ENCODE measurements at regions of chr5 and their contacts with region 1.

Region 1: GRCh38 chr5:156934450-156935211 is 28.4 kb downstream of the TIMD4 start:
- DNase-seq: peak; percentile 42
- H3K4me3 Mint-ChIP-seq: no peak overlapping the region
- H3K27ac Mint-ChIP-seq: peak overlapping the region; percentile 81
- H3K4me1 Mint-ChIP-seq: peaks cover 45% of the 10 kb centered on the region
- H3K27me3 Mint-ChIP-seq: no peaks in the 10 kb centered on the region

Region 2: GRCh38 chr5:155943516-155944407 is 990.9 kb before region 1 on chr5:
- intact Hi-C with region 1: loop called (anchors 5 kb)
- DNase-seq: no peak
- H3K4me3 Mint-ChIP-seq: no peak overlapping the region
- H3K27ac Mint-ChIP-seq: no peak overlapping the region
- H3K4me1 Mint-ChIP-seq: peaks cover 5% of the 10 kb centered on the region
- H3K27me3 Mint-ChIP-seq: peaks cover 1% of the 10 kb centered on the region

Region 3: GRCh38 chr5:156444753-156445291 is 489.8 kb before region 1 on chr5:
- intact Hi-C with region 1: no loop called
- DNase-seq: no peak
- H3K4me3 Mint-ChIP-seq: no peak overlapping the region
- H3K27ac Mint-ChIP-seq: no peak overlapping the region
- H3K4me1 Mint-ChIP-seq: no peaks in the 10 kb centered on the region
- H3K27me3 Mint-ChIP-seq: peaks cover 10% of the 10 kb centered on the region

Region 4: GRCh38 chr5:156722358-156722757 is 212.3 kb before region 1 on chr5:
- intact Hi-C with region 1: loop called (anchors 10 kb)
- DNase-seq: no peak
- H3K4me3 Mint-ChIP-seq: no peak overlapping the region
- H3K27ac Mint-ChIP-seq: no peak overlapping the region
- H3K4me1 Mint-ChIP-seq: no peaks in the 10 kb centered on the region
- H3K27me3 Mint-ChIP-seq: peaks cover 16% of the 10 kb centered on the region

Region 5: GRCh38 chr5:156815988-156816599 is 118.5 kb before region 1 on chr5:
- intact Hi-C with region 1: loop called (anchors 5 kb)
- DNase-seq: no peak
- H3K4me3 Mint-ChIP-seq: no peak overlapping the region
- H3K27ac Mint-ChIP-seq: no peak overlapping the region
- H3K4me1 Mint-ChIP-seq: peaks cover 2% of the 10 kb centered on the region
- H3K27me3 Mint-ChIP-seq: peaks cover 2% of the 10 kb centered on the region

Region 6: GRCh38 chr5:156893517-156893916 is 41.1 kb before region 1 on chr5:
- intact Hi-C with region 1: loop called (anchors 5 kb)
- DNase-seq: no peak
- H3K4me3 Mint-ChIP-seq: no peak overlapping the region
- H3K27ac Mint-ChIP-seq: peak overlapping the region; percentile 67
- H3K4me1 Mint-ChIP-seq: peaks cover 28% of the 10 kb centered on the region
- H3K27me3 Mint-ChIP-seq: no peaks in the 10 kb centered on the region

Region 7: GRCh38 chr5:157793301-157793700 is 858.7 kb after region 1 on chr5:
- intact Hi-C with region 1: no loop called
- DNase-seq: no peak
- H3K4me3 Mint-ChIP-seq: no peak overlapping the region
- H3K27ac Mint-ChIP-seq: no peak overlapping the region
- H3K4me1 Mint-ChIP-seq: peaks cover 7% of the 10 kb centered on the region
- H3K27me3 Mint-ChIP-seq: no peaks in the 10 kb centered on the region